ENCODE measurements at regions of chr20 and their contacts with region 1.

Region 1: DNA sequence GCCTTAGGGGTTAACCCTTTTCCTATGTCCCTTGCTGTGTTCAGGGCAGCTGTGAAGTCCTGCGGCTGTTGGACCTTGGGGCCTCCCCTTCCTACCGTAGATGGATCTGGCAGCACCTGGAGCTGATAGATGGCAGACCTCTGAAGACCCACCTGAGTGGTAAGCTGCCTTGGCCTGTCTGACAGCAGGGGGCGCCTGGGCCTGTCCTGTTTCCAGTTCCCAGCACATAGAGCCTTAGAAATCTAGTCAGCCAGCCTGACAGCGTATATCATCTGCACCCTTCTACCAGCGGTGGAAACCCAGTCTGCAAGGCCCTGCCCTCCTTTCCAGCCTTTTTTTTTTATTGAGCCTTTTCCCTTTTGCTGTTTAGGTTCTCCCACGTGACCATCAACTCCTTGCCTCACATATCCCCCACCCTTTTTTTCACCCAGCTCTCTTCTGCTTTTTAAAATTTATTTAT is 26.6 kb downstream of the CNBD2 start:
- DNase-seq: peak; percentile 85
- ATAC-seq: peak; percentile 98
- H3K4me3 ChIP-seq: no peak overlapping the region
- H3K27ac ChIP-seq: no peak overlapping the region
- H3K4me1 ChIP-seq: no peaks in the 10 kb centered on the region
- H3K27me3 ChIP-seq: no peaks in the 10 kb centered on the region
- CTCF ChIP-seq: peak; percentile 99
- EP300 ChIP-seq: no peak
- POLR2A ChIP-seq: no peak
- RAD21 ChIP-seq: peak; percentile 99

Region 2: DNA sequence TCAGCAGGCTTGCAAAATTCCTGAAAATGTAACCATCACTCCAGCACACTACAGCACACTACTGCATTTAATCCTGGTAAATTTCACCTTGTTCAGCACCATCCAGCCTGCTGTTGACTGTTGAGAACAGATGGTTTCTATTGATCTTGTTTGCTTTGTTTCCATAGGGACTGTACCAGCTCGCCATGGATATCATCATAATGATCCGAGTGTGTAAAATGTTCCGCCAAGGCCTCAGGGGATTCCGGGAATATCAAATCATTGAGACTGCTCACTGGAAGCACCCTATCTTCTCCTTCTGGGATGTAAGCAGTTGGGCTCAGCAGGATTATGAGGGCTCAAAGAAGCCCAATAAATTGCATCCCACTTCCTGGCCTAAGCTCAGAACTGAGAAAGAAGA is 22.6 kb before region 1 on chr20:
- CTCF ChIA-PET with region 1: no interaction called
- POLR2A ChIA-PET with region 1: no interaction called
- in situ Hi-C with region 1: no loop called
- intact Hi-C with region 1: no loop called
- DNase-seq: no peak
- ATAC-seq: no peak
- H3K4me3 ChIP-seq: no peak overlapping the region
- H3K27ac ChIP-seq: no peak overlapping the region
- H3K4me1 ChIP-seq: no peaks in the 10 kb centered on the region
- H3K27me3 ChIP-seq: peaks cover 2 to 14% of the 10 kb centered on the region in 2 experiments; a peak in 3 of 5 replicates
- CTCF ChIP-seq: no peak
- EP300 ChIP-seq: no peak
- POLR2A ChIP-seq: no peak
- RAD21 ChIP-seq: no peak

Region 3: DNA sequence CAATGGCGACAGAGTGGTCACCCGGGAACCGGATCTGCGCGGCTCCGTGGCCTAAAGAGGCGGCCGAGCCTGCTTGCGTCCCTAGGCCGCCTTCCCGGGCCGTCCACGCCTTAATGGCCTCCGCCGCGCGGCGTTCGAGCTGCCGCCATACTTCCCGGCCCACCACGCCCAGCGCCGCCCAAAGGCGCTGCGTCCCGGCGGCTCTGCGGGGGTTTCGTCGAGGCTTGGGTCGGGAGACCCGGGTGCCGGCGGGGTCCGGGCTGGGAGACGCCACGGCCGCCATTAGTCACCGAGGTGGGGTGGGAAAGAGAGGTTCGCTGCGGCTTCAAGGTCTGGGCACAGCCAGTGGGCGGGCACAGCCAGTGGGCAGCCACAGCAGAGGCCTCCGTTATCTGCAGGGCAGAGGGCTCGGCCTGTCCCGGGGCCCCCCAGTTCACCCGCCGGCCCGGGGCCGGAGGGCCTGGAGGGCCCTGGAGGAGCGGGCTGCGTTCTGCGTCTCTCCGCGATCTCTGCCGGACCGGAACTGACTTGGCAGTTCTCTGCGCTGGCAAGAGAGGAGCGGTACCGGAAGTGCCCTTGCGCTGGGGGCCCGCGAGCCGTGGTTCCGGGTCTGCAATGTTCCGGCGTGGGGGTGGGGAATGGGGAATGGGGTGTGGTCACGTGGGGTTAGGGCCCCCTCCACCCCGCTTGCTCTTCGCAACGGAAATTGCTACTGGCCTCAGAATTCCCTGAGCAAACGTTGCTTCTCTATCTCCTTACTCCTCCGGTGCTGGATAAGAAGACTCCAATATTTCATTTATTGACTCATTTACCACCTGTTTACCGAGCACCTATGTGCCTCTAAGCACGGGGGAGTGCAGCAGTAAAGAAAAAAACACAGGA is 55.7 kb after region 1 on chr20:
- CTCF ChIA-PET with region 1: no interaction called
- POLR2A ChIA-PET with region 1: no interaction called
- in situ Hi-C with region 1: no loop called
- intact Hi-C with region 1: loop called (anchors 1 kb)
- DNase-seq: peak; percentile 87
- ATAC-seq: peak; percentile 97
- H3K4me3 ChIP-seq: peak overlapping the region; percentile 87 to 99 (median 94)
- H3K27ac ChIP-seq: peak overlapping the region; percentile 95
- H3K4me1 ChIP-seq: peaks cover 50% of the 10 kb centered on the region
- H3K27me3 ChIP-seq: no peaks in the 10 kb centered on the region
- CTCF ChIP-seq: peak; percentile 28
- EP300 ChIP-seq: peak; percentile 78 to 80
- POLR2A ChIP-seq: peak; percentile 99
- RAD21 ChIP-seq: peak; percentile 74; the same call in 1 of the 2 replicates

Region 4: DNA sequence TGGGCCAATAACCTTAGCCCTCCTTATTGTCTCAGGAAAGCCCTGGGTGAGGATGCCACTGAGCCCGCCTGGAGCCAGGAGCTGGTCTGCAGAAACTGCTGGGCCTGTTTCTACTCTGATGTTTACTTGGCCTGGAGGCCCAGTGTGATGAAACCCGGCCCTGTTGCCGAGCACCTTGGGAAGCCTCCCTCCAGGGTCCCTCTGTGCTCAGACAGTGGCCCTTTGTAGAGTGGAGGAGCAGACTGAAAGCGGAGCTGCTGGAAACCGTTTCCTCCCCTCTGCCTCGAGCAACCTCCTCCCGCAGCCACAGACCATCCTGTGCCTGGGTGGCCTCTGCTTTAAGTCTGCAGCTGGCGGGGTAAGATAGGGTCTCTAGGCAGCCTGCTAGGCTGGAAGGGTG is 75.4 kb after region 1 on chr20:
- CTCF ChIA-PET with region 1: no interaction called
- POLR2A ChIA-PET with region 1: no interaction called
- in situ Hi-C with region 1: no loop called
- intact Hi-C with region 1: loop called (anchors 1 kb)
- DNase-seq: peak; percentile 78
- ATAC-seq: peak; percentile 93
- H3K4me3 ChIP-seq: peak overlapping the region in 1 of 3 experiments; percentile 45; a peak in 1 of 6 replicates
- H3K27ac ChIP-seq: no peak overlapping the region
- H3K4me1 ChIP-seq: peaks cover 39% of the 10 kb centered on the region
- H3K27me3 ChIP-seq: peaks cover 0 to 4% of the 10 kb centered on the region in 2 experiments; a peak in 2 of 5 replicates
- CTCF ChIP-seq: no peak
- EP300 ChIP-seq: peak in 1 of 2 experiments; percentile 50; a peak in 2 of 4 replicates
- POLR2A ChIP-seq: no peak
- RAD21 ChIP-seq: no peak

Region 5: GRCh38 chr20:36132802-36133211 is 137.8 kb after region 1 on chr20:
- CTCF ChIA-PET with region 1: interaction called, 259 read pairs
- POLR2A ChIA-PET with region 1: interaction called, 32 read pairs
- in situ Hi-C with region 1: loop called (anchors 5 kb)
- intact Hi-C with region 1: loop called (anchors 1 kb)
- DNase-seq: no peak
- ATAC-seq: no peak
- H3K4me3 ChIP-seq: no peak overlapping the region
- H3K27ac ChIP-seq: no peak overlapping the region
- H3K4me1 ChIP-seq: no peaks in the 10 kb centered on the region
- H3K27me3 ChIP-seq: peaks cover 2 to 38% of the 10 kb centered on the region in 2 experiments; a peak in 4 of 5 replicates
- CTCF ChIP-seq: no peak
- EP300 ChIP-seq: no peak
- POLR2A ChIP-seq: no peak
- RAD21 ChIP-seq: no peak

Region 6: GRCh38 chr20:36144336-36144735 is 149.3 kb after region 1 on chr20:
- CTCF ChIA-PET with region 1: interaction called, 259 read pairs
- POLR2A ChIA-PET with region 1: interaction called, 32 read pairs
- in situ Hi-C with region 1: loop called (anchors 5 kb)
- intact Hi-C with region 1: no loop called
- DNase-seq: no peak
- ATAC-seq: no peak
- H3K4me3 ChIP-seq: no peak overlapping the region
- H3K27ac ChIP-seq: no peak overlapping the region
- H3K4me1 ChIP-seq: peaks cover 75% of the 10 kb centered on the region
- H3K27me3 ChIP-seq: no peaks in the 10 kb centered on the region; a peak in 1 of 5 replicates
- CTCF ChIP-seq: peak; percentile 29
- EP300 ChIP-seq: no peak
- POLR2A ChIP-seq: no peak
- RAD21 ChIP-seq: no peak

Region 7: GRCh38 chr20:36199345-36200257 is 204.6 kb after region 1 on chr20:
- CTCF ChIA-PET with region 1: interaction called, 34 read pairs
- POLR2A ChIA-PET with region 1: no interaction called
- in situ Hi-C with region 1: loop called (anchors 5 kb)
- intact Hi-C with region 1: loop called (anchors 1 kb)
- DNase-seq: peak; percentile 83
- ATAC-seq: peak; percentile 90
- H3K4me3 ChIP-seq: no peak overlapping the region
- H3K27ac ChIP-seq: no peak overlapping the region
- H3K4me1 ChIP-seq: no peaks in the 10 kb centered on the region
- H3K27me3 ChIP-seq: no peaks in the 10 kb centered on the region
- CTCF ChIP-seq: peak; percentile 99
- EP300 ChIP-seq: no peak
- POLR2A ChIP-seq: no peak
- RAD21 ChIP-seq: peak; percentile 98

Region 8: DNA sequence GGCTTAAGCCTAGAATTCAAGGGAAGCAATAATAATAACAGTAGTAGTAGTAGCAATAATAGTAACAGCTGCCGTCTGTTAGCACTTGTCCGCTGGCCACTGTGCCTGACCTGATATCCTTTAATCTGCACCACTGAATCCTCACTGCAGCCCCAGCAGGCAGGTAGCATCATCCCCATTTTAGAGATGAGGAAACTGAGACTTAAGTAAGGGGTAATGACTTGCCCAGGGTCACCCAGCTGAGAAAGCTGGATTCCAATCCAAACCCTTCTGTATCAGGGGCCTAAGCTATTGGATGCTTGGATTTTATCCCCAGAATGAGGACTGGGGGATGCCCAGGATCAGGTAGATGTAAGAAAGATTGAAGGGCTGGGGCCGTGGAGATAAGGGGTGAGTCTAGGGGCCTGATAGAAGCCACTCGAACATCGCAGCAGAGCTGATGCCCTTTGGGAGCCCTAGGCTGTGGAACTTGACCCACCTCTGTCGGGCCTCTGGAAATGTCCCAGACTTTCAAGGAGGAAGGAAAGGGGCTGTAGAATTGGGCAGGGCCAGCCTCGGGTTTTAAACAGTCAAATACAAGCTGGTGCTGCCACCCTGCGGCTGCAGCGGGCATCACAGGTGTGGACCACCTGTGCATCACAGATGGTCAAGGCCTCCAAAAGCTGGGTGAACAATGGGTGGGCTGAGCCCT is 444.2 kb after region 1 on chr20:
- CTCF ChIA-PET with region 1: interaction called, 3 read pairs
- POLR2A ChIA-PET with region 1: no interaction called
- in situ Hi-C with region 1: no loop called
- intact Hi-C with region 1: loop called (anchors 10 kb)
- DNase-seq: peak; percentile 59
- ATAC-seq: peak; percentile 70
- H3K4me3 ChIP-seq: no peak overlapping the region
- H3K27ac ChIP-seq: no peak overlapping the region
- H3K4me1 ChIP-seq: no peaks in the 10 kb centered on the region
- H3K27me3 ChIP-seq: peaks cover 3 to 20% of the 10 kb centered on the region in 2 experiments; a peak in 3 of 5 replicates
- CTCF ChIP-seq: peak; percentile 98
- EP300 ChIP-seq: no peak
- POLR2A ChIP-seq: no peak
- RAD21 ChIP-seq: peak; percentile 95